Mammary epithelial cell (primary cell): ENCODE measurements at regions of chr9 and their contacts with region 1.

Region 1: DNA sequence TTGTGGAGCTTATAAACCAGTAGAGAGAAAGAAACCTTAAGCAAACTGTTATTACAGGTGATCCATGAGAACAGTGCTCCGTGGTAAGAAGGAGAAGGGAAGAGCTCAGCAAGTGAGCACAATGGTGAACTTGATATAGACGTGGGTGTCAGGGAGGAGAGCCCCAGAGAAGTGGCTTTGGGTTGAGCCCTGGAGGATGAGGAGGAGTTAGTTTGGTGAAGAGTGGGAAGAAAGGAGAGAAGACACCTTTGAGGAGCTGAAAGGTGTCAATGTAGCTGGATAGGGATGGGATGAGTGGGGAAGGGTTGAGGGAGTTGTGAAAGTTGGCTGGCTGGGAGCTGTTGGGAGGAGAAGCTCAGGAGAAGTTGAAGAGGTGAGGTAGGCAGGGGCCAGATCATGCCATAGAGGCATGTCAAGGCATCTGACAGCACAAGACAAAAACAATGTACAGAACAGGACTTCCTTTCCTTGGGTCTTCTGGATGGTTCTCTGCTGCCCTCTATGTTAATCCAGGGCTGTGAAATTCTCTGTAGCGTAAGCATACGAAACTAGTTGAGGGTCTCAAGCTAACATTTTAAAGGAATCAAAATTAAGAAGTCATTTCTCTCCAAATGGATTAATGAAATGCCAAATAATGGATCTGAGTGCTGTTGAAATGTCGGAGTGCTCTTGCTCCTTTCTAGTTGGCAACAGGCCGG is 501.9 kb downstream of the KDM4C start:
- DNase-seq: peak; percentile 8
- H3K4me3 ChIP-seq: no peak overlapping the region
- H3K27ac ChIP-seq: no peak overlapping the region
- H3K4me1 ChIP-seq: no peaks in the 10 kb centered on the region
- H3K27me3 ChIP-seq: no peaks in the 10 kb centered on the region
- CTCF ChIP-seq: peak in 1 of 2 donors; percentile 26

Region 2: DNA sequence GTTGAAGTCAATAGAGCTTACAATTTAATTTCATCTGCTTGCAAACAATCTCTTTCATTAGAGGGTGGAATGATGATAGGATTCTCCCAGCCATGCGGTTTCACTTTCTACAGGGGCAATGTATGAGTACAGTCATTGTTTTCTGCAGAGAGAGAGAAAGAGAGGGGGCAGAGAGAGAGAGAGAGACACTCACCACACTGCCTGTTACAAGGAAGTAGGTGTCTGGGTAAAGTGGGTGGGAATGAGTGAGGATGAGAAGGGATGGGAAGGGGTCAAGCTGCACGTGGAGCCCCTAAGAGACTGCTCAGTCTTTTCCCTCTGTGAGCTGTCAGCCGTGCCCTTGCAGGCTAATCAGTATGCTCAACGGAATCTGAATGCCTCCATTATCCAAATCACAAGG is 47.6 kb before region 1 on chr9:
- CTCF ChIA-PET with region 1: interaction called, 5 read pairs
- dilution Hi-C with region 1: no loop called
- in situ Hi-C with region 1: loop called in 1 of 2 experiments (anchors 5 kb)
- intact Hi-C with region 1: no loop called
- DNase-seq: peak; percentile 37
- H3K4me3 ChIP-seq: no peak overlapping the region
- H3K27ac ChIP-seq: no peak overlapping the region
- H3K4me1 ChIP-seq: peaks cover 13% of the 10 kb centered on the region
- H3K27me3 ChIP-seq: no peaks in the 10 kb centered on the region
- CTCF ChIP-seq: no peak

Region 3: DNA sequence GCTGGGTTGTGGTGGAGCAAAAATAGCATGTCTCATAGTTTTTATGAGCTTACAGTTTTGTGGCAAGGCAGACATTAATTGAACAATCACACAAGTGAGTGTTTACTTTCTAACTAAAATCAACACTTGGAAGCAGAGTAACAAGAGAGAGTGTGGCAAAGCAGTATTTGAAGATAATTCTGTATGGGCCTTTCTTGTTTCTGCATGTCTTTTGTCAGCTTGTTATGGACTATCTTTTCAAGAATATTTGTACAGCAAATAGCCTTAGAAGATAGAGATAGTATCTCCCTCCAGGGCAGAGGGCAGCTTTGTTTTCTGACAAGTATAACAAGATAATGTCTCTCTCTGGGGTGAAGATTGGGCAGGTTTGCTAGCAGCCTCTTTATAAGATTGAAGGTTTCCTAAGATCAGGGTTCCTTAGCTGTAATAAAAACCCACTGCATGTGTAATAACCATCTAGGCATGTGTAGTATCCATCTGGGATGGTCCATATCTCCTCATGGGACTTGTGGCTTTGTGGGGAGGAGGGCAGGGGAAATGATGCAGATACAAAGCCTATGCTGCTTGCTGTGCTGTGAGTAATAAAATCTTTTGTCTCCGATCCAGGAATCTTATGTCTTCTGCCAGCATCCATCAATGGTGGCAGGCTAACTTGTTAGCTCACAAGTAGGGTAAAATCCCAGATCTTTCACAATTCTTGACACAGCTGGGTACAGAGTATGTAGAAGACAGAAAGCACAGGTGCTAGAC is 22.0 kb before region 1 on chr9:
- CTCF ChIA-PET with region 1: no interaction called
- dilution Hi-C with region 1: no loop called
- in situ Hi-C with region 1: no loop called
- intact Hi-C with region 1: no loop called
- DNase-seq: no peak
- H3K4me3 ChIP-seq: no peak overlapping the region
- H3K27ac ChIP-seq: no peak overlapping the region
- H3K4me1 ChIP-seq: no peaks in the 10 kb centered on the region
- H3K27me3 ChIP-seq: no peaks in the 10 kb centered on the region
- CTCF ChIP-seq: no peak